ENCODE measurements at regions of chr20 and their contacts with region 1.

Region 1: GRCh38 chr20:57622579-57623377 is 2.6 kb upstream of the ZBP1 start:
- DNase-seq: peak; percentile 47
- ATAC-seq: no peak
- H3K4me3 Mint-ChIP-seq: no peak overlapping the region
- H3K27ac Mint-ChIP-seq: peak overlapping the region; percentile 31
- H3K4me1 Mint-ChIP-seq: peaks cover 66% of the 10 kb centered on the region
- H3K27me3 Mint-ChIP-seq: no peaks in the 10 kb centered on the region
- CTCF ChIP-seq: peak; percentile 57

Region 2: GRCh38 chr20:56712141-56712540 is 910.6 kb before region 1 on chr20:
- CTCF ChIA-PET with region 1: no interaction called
- POLR2A ChIA-PET with region 1: no interaction called
- intact Hi-C with region 1: no loop called
- DNase-seq: no peak
- ATAC-seq: no peak
- H3K4me3 Mint-ChIP-seq: no peak overlapping the region
- H3K27ac Mint-ChIP-seq: no peak overlapping the region
- H3K4me1 Mint-ChIP-seq: no peaks in the 10 kb centered on the region
- H3K27me3 Mint-ChIP-seq: no peaks in the 10 kb centered on the region
- CTCF ChIP-seq: no peak

Region 3: DNA sequence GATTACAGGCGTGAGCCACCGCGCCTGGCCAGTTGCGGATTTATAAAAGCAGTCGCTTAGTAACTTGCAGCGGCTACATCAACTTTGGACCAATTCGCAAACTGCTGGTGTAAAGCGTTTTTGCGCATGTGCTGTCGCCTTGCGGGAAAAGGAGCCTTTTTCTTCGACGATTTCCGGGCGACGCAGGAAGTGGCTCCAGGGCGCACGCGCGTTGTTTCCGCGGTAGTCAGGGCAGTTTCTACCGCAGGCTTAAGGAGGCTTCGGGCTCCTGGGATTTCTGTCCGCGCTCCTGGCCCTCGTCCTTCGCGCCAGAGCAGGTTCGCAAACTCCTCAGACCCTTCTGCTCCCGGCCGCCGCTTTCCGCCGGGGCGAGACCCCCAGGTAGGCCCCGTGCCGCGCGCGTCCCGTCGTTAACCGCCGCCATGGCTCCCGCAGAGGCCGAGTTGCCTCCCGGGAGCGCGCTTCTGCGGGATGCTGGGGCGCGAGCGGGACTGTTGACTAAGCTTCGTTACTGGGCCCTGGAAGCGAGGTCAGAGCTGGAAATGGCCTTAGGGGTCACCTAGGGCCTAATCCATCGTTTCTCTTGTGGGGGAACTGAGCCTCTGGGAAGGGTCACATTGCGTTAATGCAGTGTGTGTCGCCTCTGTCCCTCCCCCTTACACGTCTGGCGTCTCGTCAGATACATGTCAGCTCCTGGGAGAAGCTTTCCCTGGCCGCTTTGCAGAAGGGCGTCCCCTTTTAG is 271.6 kb before region 1 on chr20 and contains the start of gene RAE1:
- CTCF ChIA-PET with region 1: no interaction called
- POLR2A ChIA-PET with region 1: no interaction called
- intact Hi-C with region 1: no loop called
- DNase-seq: peak; percentile 82
- ATAC-seq: peak; percentile 86
- H3K4me3 Mint-ChIP-seq: peak within 1 kb of the TSS; percentile 90
- H3K27ac Mint-ChIP-seq: peak within 1 kb of the TSS; percentile 79
- H3K4me1 Mint-ChIP-seq: peaks cover 17% of the 10 kb centered on the region
- H3K27me3 Mint-ChIP-seq: peaks cover 3% of the 10 kb centered on the region
- CTCF ChIP-seq: no peak
- total RNA-seq, gene RAE1: 35.7 and 36.6 TPM in 2 replicates

Region 4: DNA sequence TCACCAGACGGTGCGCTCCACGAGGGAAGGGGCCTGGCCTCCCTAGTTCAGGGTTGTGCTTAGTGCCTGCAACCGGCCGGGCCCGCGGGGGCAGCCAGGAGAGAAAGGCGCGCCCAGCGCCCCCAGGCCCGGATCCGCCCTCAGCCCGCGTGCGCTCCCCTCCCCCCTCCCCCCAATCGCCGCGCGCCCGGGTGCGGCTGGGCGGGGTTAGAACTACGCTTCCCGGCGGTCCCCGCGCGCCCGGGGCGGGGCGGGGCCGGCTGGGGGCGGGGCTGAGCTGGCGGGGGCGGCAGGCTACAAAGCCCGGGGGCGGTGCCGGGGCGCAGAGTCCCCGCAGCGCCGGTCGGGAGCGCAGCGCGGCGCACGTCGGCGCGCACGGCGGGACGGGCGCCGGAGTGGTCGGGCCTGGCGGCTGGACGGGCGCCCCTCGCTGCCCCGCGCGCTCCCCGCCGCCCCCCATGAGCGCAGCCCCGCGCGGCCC is 231.7 kb before region 1 on chr20 and contains the start of gene RBM38:
- CTCF ChIA-PET with region 1: no interaction called
- POLR2A ChIA-PET with region 1: interaction called, 33 read pairs
- intact Hi-C with region 1: loop called (anchors 1 kb)
- DNase-seq: peak; percentile 77
- ATAC-seq: peak; percentile 69
- H3K4me3 Mint-ChIP-seq: peak within 1 kb of the TSS; percentile 92
- H3K27ac Mint-ChIP-seq: peak within 1 kb of the TSS; percentile 96
- H3K4me1 Mint-ChIP-seq: peaks cover 63% of the 10 kb centered on the region
- H3K27me3 Mint-ChIP-seq: no peaks in the 10 kb centered on the region
- CTCF ChIP-seq: no peak
- total RNA-seq, gene RBM38: 69.6 and 70.7 TPM in 2 replicates

Region 5: DNA sequence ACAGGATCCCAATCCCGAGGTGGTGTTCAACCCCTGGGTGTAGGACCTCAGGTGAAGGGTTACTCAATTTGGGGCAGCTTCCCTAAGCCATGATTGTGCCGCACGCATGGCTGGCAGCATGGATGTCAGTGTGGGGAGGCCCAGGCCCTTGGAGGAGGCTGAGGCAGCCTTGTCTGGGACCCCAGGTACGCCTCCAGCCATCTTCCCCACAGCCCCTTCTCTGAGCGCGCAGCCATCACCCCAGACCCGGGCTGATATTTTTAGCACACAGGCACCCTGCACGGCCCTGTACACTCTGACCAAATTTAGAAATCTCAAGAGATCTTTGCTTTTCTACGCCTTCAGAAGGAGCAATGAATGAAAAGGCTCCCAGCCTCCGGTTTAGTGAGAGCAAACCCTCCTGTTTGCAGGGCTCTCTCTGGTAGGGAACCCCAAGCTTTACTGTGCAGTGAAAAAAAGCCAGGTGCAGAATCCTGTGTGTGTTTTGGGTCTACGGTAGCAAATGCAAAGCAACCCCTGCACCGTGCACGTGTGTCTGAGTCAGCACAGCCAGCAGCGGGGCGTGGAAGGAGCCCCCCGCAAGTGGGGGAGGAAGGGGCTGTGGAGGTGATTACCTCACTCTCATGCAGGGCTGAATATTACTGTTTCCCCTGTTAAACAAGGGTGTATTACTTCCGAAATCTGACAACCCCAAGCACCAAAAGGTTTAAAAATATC is 142.2 kb before region 1 on chr20:
- CTCF ChIA-PET with region 1: no interaction called
- POLR2A ChIA-PET with region 1: interaction called, 3 read pairs
- intact Hi-C with region 1: loop called (anchors 2 kb)
- DNase-seq: peak; percentile 64
- ATAC-seq: peak; percentile 69
- H3K4me3 Mint-ChIP-seq: peak overlapping the region; percentile 73
- H3K27ac Mint-ChIP-seq: peak overlapping the region; percentile 81
- H3K4me1 Mint-ChIP-seq: peaks cover 82% of the 10 kb centered on the region
- H3K27me3 Mint-ChIP-seq: no peaks in the 10 kb centered on the region
- CTCF ChIP-seq: no peak

Region 6: GRCh38 chr20:57582432-57583305 is 40.1 kb before region 1 on chr20:
- CTCF ChIA-PET with region 1: no interaction called
- POLR2A ChIA-PET with region 1: no interaction called
- intact Hi-C with region 1: no loop called
- DNase-seq: no peak
- ATAC-seq: no peak
- H3K4me3 Mint-ChIP-seq: no peak overlapping the region
- H3K27ac Mint-ChIP-seq: no peak overlapping the region
- H3K4me1 Mint-ChIP-seq: no peaks in the 10 kb centered on the region
- H3K27me3 Mint-ChIP-seq: peaks cover 62% of the 10 kb centered on the region
- CTCF ChIP-seq: no peak

Region 7: GRCh38 chr20:57680131-57680716 is 57.4 kb after region 1 on chr20:
- CTCF ChIA-PET with region 1: interaction called, 29 read pairs
- POLR2A ChIA-PET with region 1: interaction called, 126 read pairs
- intact Hi-C with region 1: loop called (anchors 1 kb)
- DNase-seq: peak; percentile 64
- ATAC-seq: peak; percentile 72
- H3K4me3 Mint-ChIP-seq: peak overlapping the region; percentile 80
- H3K27ac Mint-ChIP-seq: peak overlapping the region; percentile 94
- H3K4me1 Mint-ChIP-seq: peaks cover 100% of the 10 kb centered on the region
- H3K27me3 Mint-ChIP-seq: no peaks in the 10 kb centered on the region
- CTCF ChIP-seq: no peak

Region 8: GRCh38 chr20:58087193-58087858 is 464.5 kb after region 1 on chr20:
- CTCF ChIA-PET with region 1: interaction called, 12 read pairs
- POLR2A ChIA-PET with region 1: no interaction called
- intact Hi-C with region 1: loop called (anchors 1 kb)
- DNase-seq: no peak
- ATAC-seq: no peak
- H3K4me3 Mint-ChIP-seq: no peak overlapping the region
- H3K27ac Mint-ChIP-seq: no peak overlapping the region
- H3K4me1 Mint-ChIP-seq: no peaks in the 10 kb centered on the region
- H3K27me3 Mint-ChIP-seq: peaks cover 16% of the 10 kb centered on the region
- CTCF ChIP-seq: no peak

Region 9: DNA sequence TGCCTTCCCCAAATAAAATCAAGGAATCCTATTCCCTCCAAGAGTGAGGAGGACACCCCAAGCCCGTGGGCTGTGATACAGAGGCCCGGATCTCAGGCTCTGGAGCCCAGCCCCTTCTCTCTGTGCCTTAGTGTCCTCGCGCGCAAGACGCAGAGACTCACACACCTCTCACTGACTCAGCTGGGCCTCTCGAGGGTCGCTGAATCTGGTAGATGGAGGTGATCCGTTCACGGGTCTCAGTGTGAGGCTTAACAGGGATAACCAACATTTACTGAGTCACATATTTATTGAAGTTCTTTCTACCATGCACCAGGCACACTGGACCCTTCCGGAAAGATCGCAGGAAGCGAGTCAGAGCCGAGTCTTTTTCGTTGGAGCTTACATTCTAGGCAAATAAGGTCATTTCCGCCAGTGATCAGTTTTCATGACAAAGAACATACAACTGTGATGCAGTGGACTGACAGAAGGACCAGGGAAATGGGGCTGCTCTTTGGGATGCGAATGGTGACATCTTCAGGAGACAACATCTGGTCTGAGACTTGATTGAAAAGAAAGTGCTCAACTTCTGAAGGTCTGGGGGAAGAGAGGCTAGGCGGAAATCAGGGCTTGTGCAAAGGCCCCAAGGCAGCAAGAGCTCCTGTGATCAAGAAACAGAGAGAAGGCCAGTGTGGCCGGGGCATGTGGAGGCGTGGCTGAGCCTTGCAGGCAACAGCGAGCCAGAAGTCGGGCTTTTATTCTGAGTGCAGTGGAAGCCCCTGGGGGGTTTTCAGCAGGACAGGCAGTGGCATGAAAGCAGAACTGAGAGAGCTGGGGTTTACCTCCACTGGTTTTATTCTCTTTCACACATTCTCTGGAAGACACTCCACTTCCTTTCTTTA is 835.6 kb after region 1 on chr20:
- CTCF ChIA-PET with region 1: no interaction called
- POLR2A ChIA-PET with region 1: no interaction called
- intact Hi-C with region 1: loop called (anchors 10 kb)
- DNase-seq: peak; percentile 58
- ATAC-seq: peak; percentile 99
- H3K4me3 Mint-ChIP-seq: peak overlapping the region; percentile 53
- H3K27ac Mint-ChIP-seq: peak overlapping the region; percentile 74
- H3K4me1 Mint-ChIP-seq: peaks cover 30% of the 10 kb centered on the region
- H3K27me3 Mint-ChIP-seq: no peaks in the 10 kb centered on the region
- CTCF ChIP-seq: no peak

Region 10: DNA sequence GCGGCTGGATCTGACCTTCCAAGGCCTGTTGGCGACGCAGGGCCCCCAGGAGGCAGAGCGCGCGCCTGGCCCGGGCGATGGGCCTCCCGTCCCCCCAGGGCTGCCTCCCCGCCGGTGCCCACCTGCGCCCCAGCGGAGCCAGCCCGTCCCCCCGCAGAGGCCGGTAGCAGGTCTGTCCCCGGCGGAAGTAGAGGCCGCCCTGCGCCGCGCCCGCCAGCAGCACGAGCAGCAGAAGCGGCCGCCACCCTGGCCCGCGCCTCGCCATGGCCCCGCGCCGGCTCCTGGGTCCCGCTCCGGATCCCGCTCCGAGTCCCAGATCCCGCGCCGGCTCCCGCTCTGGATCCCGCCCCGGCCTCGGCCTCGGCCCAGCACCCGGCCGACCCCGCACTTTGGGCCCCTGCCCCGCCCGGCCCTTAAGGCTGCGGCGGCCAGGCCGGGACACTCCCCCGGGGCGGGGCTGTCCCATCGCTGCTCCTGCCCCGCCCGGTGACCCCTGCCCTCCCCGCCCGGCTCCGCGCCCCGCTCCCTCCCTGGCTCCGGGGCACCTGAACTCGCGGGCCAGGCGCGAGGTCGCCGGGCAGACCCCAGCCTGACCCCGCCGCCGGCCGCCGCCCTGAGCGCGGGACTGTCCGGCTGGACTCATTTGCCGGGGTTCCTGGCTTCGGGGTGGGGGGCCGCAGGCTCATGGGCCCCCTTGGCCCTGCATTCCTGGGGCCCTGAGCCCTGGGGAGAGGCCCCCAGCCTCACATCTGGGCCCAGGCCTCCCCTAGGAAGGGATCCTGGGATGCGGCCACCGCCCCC is 1384.3 kb after region 1 on chr20 and contains the start of gene CTSZ:
- CTCF ChIA-PET with region 1: no interaction called
- POLR2A ChIA-PET with region 1: interaction called, 4 read pairs
- intact Hi-C with region 1: loop called (anchors 10 kb)
- DNase-seq: peak; percentile 65
- ATAC-seq: peak; percentile 25
- H3K4me3 Mint-ChIP-seq: peak within 1 kb of the TSS; percentile 95
- H3K27ac Mint-ChIP-seq: peak within 1 kb of the TSS; percentile 99
- H3K4me1 Mint-ChIP-seq: peaks cover 61% of the 10 kb centered on the region
- H3K27me3 Mint-ChIP-seq: no peaks in the 10 kb centered on the region
- CTCF ChIP-seq: no peak
- total RNA-seq, gene CTSZ: 262 and 278 TPM in 2 replicates

Measured in activated B cell treated with CpG ODN at 0.5 μM for 24 hours (primary cell).